Right lobe of liver (tissue), 6 donors: ENCODE measurements at regions of chr1 and their contacts with region 1.

Region 1: DNA sequence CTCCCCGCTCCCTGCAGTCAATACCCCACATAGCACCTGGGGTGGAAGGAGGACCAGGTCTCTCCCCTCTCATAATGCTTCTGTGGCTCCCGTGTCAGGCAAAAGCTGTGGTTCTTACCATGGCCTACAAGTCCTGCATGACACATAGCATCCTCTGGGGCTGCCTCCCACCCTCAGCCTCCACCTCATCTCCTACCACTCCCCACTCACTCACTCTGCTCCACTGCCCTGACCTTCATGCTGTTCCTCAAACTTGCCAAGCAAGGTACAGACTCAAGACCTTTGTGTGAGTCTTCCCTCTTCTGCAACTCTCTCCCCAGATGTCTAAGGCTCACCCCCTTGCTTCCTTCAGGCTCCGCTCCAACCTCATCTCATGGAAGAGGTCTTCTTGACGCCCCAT is 28.0 kb upstream of the VANGL1 start:
- DNase-seq: no peak
- ATAC-seq: no peak
- H3K4me3 ChIP-seq: no peak overlapping the region
- H3K27ac ChIP-seq: no peak overlapping the region
- H3K4me1 ChIP-seq: no peaks in the 10 kb centered on the region
- H3K27me3 ChIP-seq: no peaks in the 10 kb centered on the region
- CTCF ChIP-seq: no peak
- POLR2A ChIP-seq: no peak

Region 2: GRCh38 chr1:115440733-115441132 is 173.0 kb before region 1 on chr1:
- intact Hi-C with region 1: no loop called
- DNase-seq: no peak
- ATAC-seq: no peak
- H3K4me3 ChIP-seq: no peak overlapping the region
- H3K27ac ChIP-seq: no peak overlapping the region
- H3K4me1 ChIP-seq: no peaks in the 10 kb centered on the region
- H3K27me3 ChIP-seq: no peaks in the 10 kb centered on the region
- CTCF ChIP-seq: no peak
- POLR2A ChIP-seq: no peak

Region 3: DNA sequence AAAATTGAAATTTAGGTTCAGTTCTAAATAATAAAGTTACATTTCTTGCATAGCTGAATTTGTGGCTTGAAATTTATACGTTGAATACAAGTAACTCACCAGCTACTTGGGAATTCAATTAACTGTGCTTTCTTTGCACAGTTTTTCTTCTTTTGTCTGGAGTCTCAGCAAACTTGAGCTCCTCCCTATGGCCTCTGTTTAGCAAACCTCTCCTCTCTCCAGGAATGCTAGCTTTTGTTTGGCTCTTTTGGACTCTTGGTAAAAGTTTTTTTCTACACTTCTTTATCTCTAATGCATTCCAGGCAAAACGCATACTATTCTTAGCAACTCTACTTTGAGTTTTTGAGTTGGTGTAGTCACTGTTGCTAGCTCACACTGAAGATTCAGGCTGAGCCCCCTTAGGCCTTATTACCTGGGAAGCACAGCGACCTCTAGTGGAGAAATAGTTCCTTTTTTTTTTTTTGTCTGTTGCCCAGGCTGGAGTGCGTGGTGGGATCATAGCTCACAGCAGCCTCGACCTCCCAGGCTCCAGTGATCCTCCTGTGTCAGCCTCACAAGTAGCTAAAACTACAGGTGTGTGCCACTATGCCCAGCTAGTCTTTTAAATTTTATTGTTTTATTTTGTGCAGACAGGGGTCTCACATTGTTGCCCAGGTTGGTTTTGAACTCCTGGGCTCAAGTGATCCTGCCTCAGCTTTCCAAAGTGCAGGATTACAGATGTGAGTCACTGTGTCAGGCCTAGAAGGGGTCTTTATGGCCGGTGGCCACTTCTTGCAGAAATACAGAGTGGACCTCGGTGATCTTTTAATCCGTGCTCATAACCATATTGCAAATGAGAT is 93.0 kb after region 1 on chr1:
- intact Hi-C with region 1: loop called in 1 of 2 experiments (anchors 10 kb)
- DNase-seq: no peak
- ATAC-seq: peak; percentile 45 to 62 (median 56)
- H3K4me3 ChIP-seq: no peak overlapping the region
- H3K27ac ChIP-seq: no peak overlapping the region
- H3K4me1 ChIP-seq: no peaks in the 10 kb centered on the region
- H3K27me3 ChIP-seq: no peaks in the 10 kb centered on the region
- CTCF ChIP-seq: peak; percentile 35 to 75 (median 66)
- POLR2A ChIP-seq: no peak

Region 4: GRCh38 chr1:115764541-115764940 is 150.8 kb after region 1 on chr1:
- intact Hi-C with region 1: loop called (anchors 10 kb)
- DNase-seq: peak in 2 of 3 donors; percentile 22 to 59
- ATAC-seq: peak; percentile 69 to 84 (median 78)
- H3K4me3 ChIP-seq: no peak overlapping the region
- H3K27ac ChIP-seq: no peak overlapping the region
- H3K4me1 ChIP-seq: no peaks in the 10 kb centered on the region
- H3K27me3 ChIP-seq: no peaks in the 10 kb centered on the region
- CTCF ChIP-seq: peak; percentile 38 to 54 (median 44)
- POLR2A ChIP-seq: no peak